MCF 10A (cell line): ENCODE measurements at regions of chr4 and their contacts with region 1.

Region 1: DNA sequence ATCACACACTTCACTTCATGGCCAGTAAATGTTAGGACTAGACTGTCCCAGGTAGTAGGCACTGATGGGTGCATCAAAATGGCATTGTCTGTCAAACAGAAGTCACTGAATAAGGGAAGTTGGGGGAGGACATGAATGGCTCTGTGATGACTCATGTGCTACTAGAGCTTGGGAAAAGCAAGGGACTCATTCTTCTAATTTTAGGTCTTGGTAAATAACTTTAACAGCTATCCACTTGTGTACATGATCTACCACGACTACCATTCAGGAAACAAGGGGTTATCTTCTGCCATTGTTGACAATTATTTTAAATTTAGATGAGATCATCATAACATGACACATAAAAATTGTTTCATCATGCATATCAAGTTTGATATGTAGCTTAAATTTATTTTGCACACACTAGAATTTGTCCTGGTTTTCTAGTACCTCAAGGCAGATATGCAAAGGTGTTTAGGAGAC is 6.3 kb downstream of the AREG start:
- DNase-seq: peak; percentile 85
- H3K4me3 Mint-ChIP-seq: peak overlapping the region; percentile 95
- H3K27ac Mint-ChIP-seq: peak overlapping the region; percentile 37
- H3K4me1 Mint-ChIP-seq: peaks cover 32% of the 10 kb centered on the region
- H3K27me3 Mint-ChIP-seq: no peaks in the 10 kb centered on the region
- CTCF ChIP-seq: no peak

Region 2: GRCh38 chr4:74217365-74217764 is 233.9 kb before region 1 on chr4:
- CTCF ChIA-PET with region 1: no interaction called
- POLR2A ChIA-PET with region 1: no interaction called
- intact Hi-C with region 1: no loop called
- DNase-seq: peak; percentile 35
- H3K4me3 Mint-ChIP-seq: no peak overlapping the region
- H3K27ac Mint-ChIP-seq: peak overlapping the region; percentile 3
- H3K4me1 Mint-ChIP-seq: peaks cover 33% of the 10 kb centered on the region
- H3K27me3 Mint-ChIP-seq: no peaks in the 10 kb centered on the region
- CTCF ChIP-seq: no peak

Region 3: GRCh38 chr4:74344031-74344430 is 107.2 kb before region 1 on chr4:
- CTCF ChIA-PET with region 1: no interaction called
- POLR2A ChIA-PET with region 1: no interaction called
- intact Hi-C with region 1: no loop called
- DNase-seq: no peak
- H3K4me3 Mint-ChIP-seq: no peak overlapping the region
- H3K27ac Mint-ChIP-seq: no peak overlapping the region
- H3K4me1 Mint-ChIP-seq: peaks cover 6% of the 10 kb centered on the region
- H3K27me3 Mint-ChIP-seq: no peaks in the 10 kb centered on the region
- CTCF ChIP-seq: no peak

Region 4: DNA sequence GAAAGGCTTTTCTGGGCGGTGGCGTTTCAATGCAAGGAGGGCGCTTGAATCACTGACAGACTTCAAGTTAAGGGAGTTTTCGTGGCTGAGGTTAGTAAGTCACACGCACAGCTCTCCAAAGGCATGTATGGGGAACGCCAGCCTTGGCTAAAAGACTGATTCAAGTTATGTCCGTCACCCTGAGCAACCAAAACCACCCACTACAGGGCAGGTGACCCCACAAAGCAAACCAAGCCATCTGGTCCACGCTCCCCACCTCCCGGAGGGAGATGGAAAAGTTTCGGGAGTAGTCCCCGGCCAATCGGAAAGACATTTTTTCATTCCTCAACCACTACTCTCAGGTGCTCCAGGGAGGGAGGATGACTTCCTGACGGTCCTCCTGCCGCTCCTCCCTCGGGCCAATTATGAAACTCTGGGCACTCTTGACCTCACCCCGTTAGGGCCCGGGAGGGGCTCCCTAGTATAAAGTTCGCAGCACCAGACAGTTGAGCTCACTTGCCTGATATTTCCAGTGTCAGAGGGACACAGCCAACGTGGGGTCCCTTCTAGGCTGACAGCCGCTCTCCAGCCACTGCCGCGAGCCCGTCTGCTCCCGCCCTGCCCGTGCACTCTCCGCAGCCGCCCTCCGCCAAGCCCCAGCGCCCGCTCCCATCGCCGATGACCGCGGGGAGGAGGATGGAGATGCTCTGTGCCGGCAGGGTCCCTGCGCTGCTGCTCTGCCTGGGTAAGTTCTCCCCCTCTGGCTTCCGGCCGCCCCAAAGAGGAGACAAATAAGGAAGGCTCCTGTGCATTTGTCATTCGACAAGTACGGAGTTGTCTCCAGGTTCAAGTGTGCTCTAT is 86.4 kb before region 1 on chr4 and contains the start of gene EREG:
- CTCF ChIA-PET with region 1: interaction called, 3 read pairs
- POLR2A ChIA-PET with region 1: interaction called, 22 read pairs
- intact Hi-C with region 1: no loop called
- DNase-seq: peak; percentile 66
- H3K4me3 Mint-ChIP-seq: peak within 1 kb of the TSS; percentile 77
- H3K27ac Mint-ChIP-seq: peak within 1 kb of the TSS; percentile 59
- H3K4me1 Mint-ChIP-seq: peaks cover 17% of the 10 kb centered on the region
- H3K27me3 Mint-ChIP-seq: no peaks in the 10 kb centered on the region
- CTCF ChIP-seq: no peak
- total RNA-seq, gene EREG: 28.3 and 34.0 TPM in 2 replicates

Region 5: DNA sequence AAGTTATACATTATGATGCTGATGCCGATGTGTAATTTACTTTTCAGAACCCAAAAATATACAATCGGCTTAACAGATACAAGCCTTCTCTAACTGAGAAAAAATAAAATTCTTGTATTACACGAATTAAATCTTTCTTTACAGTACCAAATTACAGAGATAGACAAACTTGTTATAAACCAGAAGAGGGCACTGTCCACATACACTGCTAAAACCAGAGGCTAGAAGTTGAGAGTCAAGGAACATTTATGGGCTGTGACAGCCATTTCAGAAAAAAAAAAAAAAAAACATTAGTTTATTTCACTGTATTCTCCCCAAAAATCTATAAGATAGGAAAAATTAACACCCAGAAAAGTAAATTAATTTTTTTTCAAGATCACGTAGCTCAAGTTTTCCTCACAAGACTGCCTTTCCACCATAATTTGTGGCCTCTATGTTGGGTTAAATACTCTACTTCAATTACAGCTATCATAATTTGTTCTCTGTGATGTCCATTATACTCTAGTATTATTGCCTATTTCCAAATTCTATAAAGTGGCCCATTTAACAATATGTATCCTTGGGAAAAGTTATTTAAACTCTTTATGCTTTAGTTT is 74.2 kb before region 1 on chr4:
- CTCF ChIA-PET with region 1: interaction called, 55 read pairs
- POLR2A ChIA-PET with region 1: interaction called, 188 read pairs
- intact Hi-C with region 1: no loop called
- DNase-seq: peak; percentile 79
- H3K4me3 Mint-ChIP-seq: peak overlapping the region; percentile 71
- H3K27ac Mint-ChIP-seq: peak overlapping the region; percentile 97
- H3K4me1 Mint-ChIP-seq: peaks cover 20% of the 10 kb centered on the region
- H3K27me3 Mint-ChIP-seq: no peaks in the 10 kb centered on the region
- CTCF ChIP-seq: peak; percentile 71

Region 6: GRCh38 chr4:74418063-74418670 is 33.1 kb before region 1 on chr4:
- CTCF ChIA-PET with region 1: interaction called, 3 read pairs
- POLR2A ChIA-PET with region 1: interaction called, 217 read pairs
- intact Hi-C with region 1: no loop called
- DNase-seq: peak; percentile 96
- H3K4me3 Mint-ChIP-seq: peak overlapping the region; percentile 61
- H3K27ac Mint-ChIP-seq: peak overlapping the region; percentile 94
- H3K4me1 Mint-ChIP-seq: peaks cover 63% of the 10 kb centered on the region
- H3K27me3 Mint-ChIP-seq: no peaks in the 10 kb centered on the region
- CTCF ChIP-seq: no peak

Region 7: DNA sequence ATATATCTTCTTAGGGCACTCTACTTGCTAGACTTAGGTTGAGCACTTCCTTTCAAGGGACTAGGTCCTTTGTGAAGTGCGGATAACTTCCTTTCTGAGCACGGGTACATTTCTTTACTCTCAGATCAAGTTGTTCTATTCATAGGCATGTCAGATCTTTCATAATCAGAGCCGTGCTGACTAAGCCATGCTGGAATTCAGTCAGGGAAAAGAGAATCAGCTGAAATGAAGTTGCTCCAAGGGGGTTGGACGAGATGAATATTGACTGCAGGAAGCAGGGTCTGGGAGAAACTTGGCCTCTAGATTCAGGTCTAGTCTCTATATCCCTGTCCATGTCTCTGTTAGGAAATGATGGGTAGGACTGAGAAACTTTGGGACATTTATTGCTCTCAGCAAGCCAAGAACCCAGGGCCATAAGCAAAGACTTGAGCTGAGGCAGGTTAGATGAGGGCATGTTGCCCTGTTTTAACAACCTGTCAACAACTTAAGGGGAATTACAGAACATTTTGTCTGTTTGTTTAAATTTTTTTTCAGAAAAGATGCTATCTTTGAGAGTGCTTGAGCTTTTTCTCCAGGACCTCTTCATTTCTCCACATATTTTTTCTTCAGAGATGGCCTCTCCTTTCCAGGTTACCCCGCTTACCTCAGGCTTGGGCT is 22.1 kb after region 1 on chr4:
- CTCF ChIA-PET with region 1: interaction called, 4 read pairs
- POLR2A ChIA-PET with region 1: interaction called, 104 read pairs
- intact Hi-C with region 1: no loop called
- DNase-seq: peak; percentile 85
- H3K4me3 Mint-ChIP-seq: no peak overlapping the region
- H3K27ac Mint-ChIP-seq: no peak overlapping the region
- H3K4me1 Mint-ChIP-seq: peaks cover 37% of the 10 kb centered on the region
- H3K27me3 Mint-ChIP-seq: no peaks in the 10 kb centered on the region
- CTCF ChIP-seq: no peak

Region 8: GRCh38 chr4:74623041-74623440 is 171.8 kb after region 1 on chr4:
- CTCF ChIA-PET with region 1: interaction called, 4 read pairs
- POLR2A ChIA-PET with region 1: no interaction called
- intact Hi-C with region 1: loop called (anchors 2 kb)
- DNase-seq: peak; percentile 74
- H3K4me3 Mint-ChIP-seq: no peak overlapping the region
- H3K27ac Mint-ChIP-seq: no peak overlapping the region
- H3K4me1 Mint-ChIP-seq: peaks cover 52% of the 10 kb centered on the region
- H3K27me3 Mint-ChIP-seq: no peaks in the 10 kb centered on the region
- CTCF ChIP-seq: peak; percentile 47